Activated B cell treated with CpG ODN at 0.5 μM for 24 hours (primary cell): ENCODE measurements at regions of chr6 and their contacts with region 1.

Region 1: GRCh38 chr6:31079656-31080261 is 32.6 kb downstream of the C6orf15 start:
- DNase-seq: peak; percentile 34
- ATAC-seq: peak; percentile 84
- H3K4me3 Mint-ChIP-seq: peak overlapping the region; percentile 46
- H3K27ac Mint-ChIP-seq: no peak overlapping the region
- H3K4me1 Mint-ChIP-seq: peaks cover 3% of the 10 kb centered on the region
- H3K27me3 Mint-ChIP-seq: peaks cover 5% of the 10 kb centered on the region
- CTCF ChIP-seq: peak; percentile 82

Region 2: GRCh38 chr6:30821862-30822782 is 257.6 kb before region 1 on chr6:
- CTCF ChIA-PET with region 1: interaction called, 73 read pairs
- POLR2A ChIA-PET with region 1: interaction called, 3 read pairs
- intact Hi-C with region 1: no loop called
- DNase-seq: no peak
- ATAC-seq: no peak
- H3K4me3 Mint-ChIP-seq: no peak overlapping the region
- H3K27ac Mint-ChIP-seq: no peak overlapping the region
- H3K4me1 Mint-ChIP-seq: peaks cover 6% of the 10 kb centered on the region
- H3K27me3 Mint-ChIP-seq: peaks cover 9% of the 10 kb centered on the region
- CTCF ChIP-seq: no peak

Region 3: DNA sequence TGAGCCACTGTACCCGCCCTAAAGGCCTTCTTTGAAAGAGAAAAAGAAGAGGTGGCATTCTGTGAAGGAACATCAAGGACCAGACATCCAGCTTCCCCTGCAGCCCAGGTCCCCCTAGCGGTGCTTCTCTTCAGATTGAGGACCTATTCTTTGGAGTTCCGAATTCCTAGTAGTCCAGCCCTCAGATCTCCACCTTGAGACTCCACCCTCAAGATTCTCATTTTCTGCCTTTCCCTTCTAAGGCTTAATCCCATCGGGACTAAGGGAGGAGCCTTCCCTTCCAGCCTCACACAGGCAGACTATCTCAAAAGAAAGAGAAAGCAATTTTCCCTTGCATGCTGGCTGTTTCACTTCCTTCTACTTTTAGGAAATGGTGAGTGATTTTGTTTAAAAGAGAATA is 37.0 kb before region 1 on chr6:
- CTCF ChIA-PET with region 1: no interaction called
- POLR2A ChIA-PET with region 1: no interaction called
- intact Hi-C with region 1: no loop called
- DNase-seq: no peak
- ATAC-seq: peak; percentile 40
- H3K4me3 Mint-ChIP-seq: peak overlapping the region; percentile 81
- H3K27ac Mint-ChIP-seq: peak overlapping the region; percentile 55
- H3K4me1 Mint-ChIP-seq: peaks cover 13% of the 10 kb centered on the region
- H3K27me3 Mint-ChIP-seq: peaks cover 7% of the 10 kb centered on the region
- CTCF ChIP-seq: no peak

Region 4: GRCh38 chr6:31068669-31069340 is 11.0 kb before region 1 on chr6:
- CTCF ChIA-PET with region 1: interaction called, 17 read pairs
- POLR2A ChIA-PET with region 1: no interaction called
- intact Hi-C with region 1: no loop called
- DNase-seq: peak; percentile 52
- ATAC-seq: peak; percentile 99
- H3K4me3 Mint-ChIP-seq: no peak overlapping the region
- H3K27ac Mint-ChIP-seq: peak overlapping the region; percentile 24
- H3K4me1 Mint-ChIP-seq: peaks cover 5% of the 10 kb centered on the region
- H3K27me3 Mint-ChIP-seq: no peaks in the 10 kb centered on the region
- CTCF ChIP-seq: peak; percentile 55

Region 5: DNA sequence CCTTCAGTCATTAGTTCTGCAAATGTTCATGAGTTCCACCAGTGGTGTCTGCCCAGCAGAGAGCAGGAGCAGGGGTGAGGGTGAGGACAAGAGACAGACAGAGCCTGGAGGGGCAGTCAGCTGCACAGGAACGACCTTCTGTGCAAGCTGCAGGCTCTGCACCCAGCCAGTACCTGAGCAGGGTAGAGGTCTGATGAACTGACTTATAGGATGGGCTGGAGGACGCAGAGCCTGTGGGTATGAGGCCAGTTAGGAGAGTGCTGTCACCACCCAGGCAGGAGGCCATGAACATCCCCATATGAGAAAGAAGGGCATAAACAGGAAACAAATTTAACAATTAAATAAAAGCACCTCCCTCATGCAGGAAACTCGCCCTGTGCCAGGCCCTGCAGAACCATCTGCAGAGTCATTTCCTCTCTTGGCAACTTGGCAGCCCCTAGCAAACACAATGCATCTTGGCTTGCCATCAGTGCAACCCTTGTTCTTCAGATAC is 14.7 kb after region 1 on chr6:
- CTCF ChIA-PET with region 1: interaction called, 12 read pairs
- POLR2A ChIA-PET with region 1: no interaction called
- intact Hi-C with region 1: no loop called
- DNase-seq: no peak
- ATAC-seq: peak; percentile 45
- H3K4me3 Mint-ChIP-seq: no peak overlapping the region
- H3K27ac Mint-ChIP-seq: peak overlapping the region; percentile 62
- H3K4me1 Mint-ChIP-seq: peaks cover 17% of the 10 kb centered on the region
- H3K27me3 Mint-ChIP-seq: no peaks in the 10 kb centered on the region
- CTCF ChIP-seq: no peak

Region 6: DNA sequence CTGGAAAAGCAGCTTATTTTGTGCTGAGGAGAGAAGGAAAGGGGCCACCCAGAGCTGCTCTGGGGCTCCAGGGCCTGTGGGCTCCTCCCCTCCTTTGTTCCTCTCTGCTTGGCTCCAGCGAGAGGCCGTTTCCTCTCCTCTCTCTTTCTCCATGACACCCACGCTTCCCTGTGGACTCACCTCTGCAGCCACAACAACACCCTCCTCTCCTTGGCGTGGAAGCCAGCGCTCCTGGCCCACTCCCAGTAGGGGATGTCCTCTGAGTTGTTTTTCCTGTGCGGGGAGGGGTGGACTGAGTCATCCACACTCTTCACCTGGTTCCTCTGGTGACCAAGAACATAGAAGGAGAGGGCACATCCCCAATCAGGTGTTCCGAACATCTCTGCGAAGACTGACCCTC is 45.4 kb after region 1 on chr6:
- CTCF ChIA-PET with region 1: no interaction called
- POLR2A ChIA-PET with region 1: no interaction called
- intact Hi-C with region 1: no loop called
- DNase-seq: no peak
- ATAC-seq: no peak
- H3K4me3 Mint-ChIP-seq: no peak overlapping the region
- H3K27ac Mint-ChIP-seq: no peak overlapping the region
- H3K4me1 Mint-ChIP-seq: peaks cover 5% of the 10 kb centered on the region
- H3K27me3 Mint-ChIP-seq: peaks cover 22% of the 10 kb centered on the region
- CTCF ChIP-seq: no peak

Region 7: DNA sequence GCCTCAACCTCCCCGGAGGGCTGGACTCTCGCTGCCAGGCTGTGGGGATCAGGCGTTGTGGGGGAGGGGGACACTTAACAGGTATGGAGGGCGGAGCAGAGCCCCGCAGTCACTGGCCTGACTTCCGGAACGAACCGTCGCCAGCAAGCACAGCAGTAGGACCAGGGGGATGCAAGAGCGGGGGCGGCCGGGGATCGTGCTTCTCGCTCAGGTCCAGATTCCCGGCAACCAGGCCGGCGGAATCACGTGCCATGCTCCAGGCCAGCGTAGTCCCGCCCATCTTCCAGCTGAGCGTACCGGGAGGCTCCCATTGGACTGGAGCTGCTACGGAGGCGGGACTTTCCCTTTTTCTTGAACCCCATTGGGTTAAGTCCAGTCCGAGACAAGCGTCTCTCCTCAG is 100.7 kb after region 1 on chr6:
- CTCF ChIA-PET with region 1: no interaction called
- POLR2A ChIA-PET with region 1: no interaction called
- intact Hi-C with region 1: no loop called
- DNase-seq: no peak
- ATAC-seq: peak; percentile 98
- H3K4me3 Mint-ChIP-seq: peak overlapping the region; percentile 85
- H3K27ac Mint-ChIP-seq: peak overlapping the region; percentile 65
- H3K4me1 Mint-ChIP-seq: peaks cover 12% of the 10 kb centered on the region
- H3K27me3 Mint-ChIP-seq: no peaks in the 10 kb centered on the region
- CTCF ChIP-seq: no peak

Region 8: DNA sequence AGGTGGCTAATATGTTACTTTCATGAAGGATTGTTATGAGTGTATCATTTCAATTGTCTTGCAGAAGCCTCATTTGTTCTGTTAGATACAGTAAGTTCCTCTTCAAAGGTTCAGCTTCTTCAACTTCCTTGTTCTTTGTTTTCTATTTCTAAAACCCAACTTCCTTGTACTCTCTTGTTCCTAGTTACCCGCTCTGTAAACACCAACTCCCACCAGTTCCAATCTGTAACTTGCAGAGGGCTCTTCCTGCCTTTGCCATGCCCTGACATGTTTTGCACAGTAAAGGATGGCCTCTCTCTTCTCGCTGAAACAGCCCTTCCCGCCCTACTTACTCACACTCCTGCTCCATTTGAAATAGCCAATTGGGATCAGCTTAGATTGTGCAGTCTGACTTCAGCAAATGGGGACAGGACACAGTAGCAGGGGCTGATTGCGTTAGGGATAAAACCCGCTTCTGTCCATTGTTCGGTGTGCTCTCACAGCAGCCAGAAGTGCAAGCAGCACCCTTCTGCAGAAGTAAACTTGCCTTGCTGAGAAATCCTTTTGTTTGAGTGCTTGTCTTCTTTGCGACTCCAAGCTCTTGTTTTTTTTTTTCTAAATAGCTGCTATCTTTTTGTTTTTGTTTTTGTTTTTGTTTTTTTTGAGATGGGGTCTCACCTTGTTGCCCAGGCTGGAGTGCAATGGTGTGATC is 136.6 kb after region 1 on chr6:
- CTCF ChIA-PET with region 1: no interaction called
- POLR2A ChIA-PET with region 1: interaction called, 12 read pairs
- intact Hi-C with region 1: no loop called
- DNase-seq: no peak
- ATAC-seq: peak; percentile 7
- H3K4me3 Mint-ChIP-seq: no peak overlapping the region
- H3K27ac Mint-ChIP-seq: peak overlapping the region; percentile 70
- H3K4me1 Mint-ChIP-seq: peaks cover 11% of the 10 kb centered on the region
- H3K27me3 Mint-ChIP-seq: no peaks in the 10 kb centered on the region
- CTCF ChIP-seq: no peak

Region 9: GRCh38 chr6:31580807-31581433 is 501.2 kb after region 1 on chr6:
- CTCF ChIA-PET with region 1: no interaction called
- POLR2A ChIA-PET with region 1: no interaction called
- intact Hi-C with region 1: no loop called
- DNase-seq: peak; percentile 94
- ATAC-seq: peak; percentile 71
- H3K4me3 Mint-ChIP-seq: peak overlapping the region; percentile 99
- H3K27ac Mint-ChIP-seq: peak overlapping the region; percentile 94
- H3K4me1 Mint-ChIP-seq: peaks cover 83% of the 10 kb centered on the region
- H3K27me3 Mint-ChIP-seq: no peaks in the 10 kb centered on the region
- CTCF ChIP-seq: peak; percentile 91